ENCODE measurements at regions of chr20 and their contacts with region 1.

Region 1: GRCh38 chr20:11544029-11544678 is 373.5 kb upstream of the BTBD3 start:
- DNase-seq: no peak
- ATAC-seq: peak; percentile 54 to 62
- H3K4me3 ChIP-seq: no peak overlapping the region
- H3K27ac ChIP-seq: no peak overlapping the region
- H3K4me1 ChIP-seq: peaks cover 4% of the 10 kb centered on the region
- H3K27me3 ChIP-seq: no peaks in the 10 kb centered on the region
- CTCF ChIP-seq: peak; percentile 61

Region 2: GRCh38 chr20:9616833-9617489 is 1927.2 kb before region 1 on chr20:
- intact Hi-C with region 1: loop called (anchors 10 kb)
- DNase-seq: peak; percentile 68
- ATAC-seq: peak; percentile 84 to 89
- H3K4me3 ChIP-seq: no peak overlapping the region
- H3K27ac ChIP-seq: no peak overlapping the region
- H3K4me1 ChIP-seq: no peaks in the 10 kb centered on the region
- H3K27me3 ChIP-seq: peaks cover 8% of the 10 kb centered on the region
- CTCF ChIP-seq: peak; percentile 81

Region 3: GRCh38 chr20:10553326-10553984 is 990.7 kb before region 1 on chr20:
- intact Hi-C with region 1: loop called (anchors 10 kb)
- DNase-seq: peak; percentile 68
- ATAC-seq: peak; percentile 81
- H3K4me3 ChIP-seq: no peak overlapping the region
- H3K27ac ChIP-seq: no peak overlapping the region
- H3K4me1 ChIP-seq: peaks cover 17% of the 10 kb centered on the region
- H3K27me3 ChIP-seq: no peaks in the 10 kb centered on the region
- CTCF ChIP-seq: peak; percentile 80

Measured in lower lobe of right lung (tissue), 2 donors.